GM13976 (cell line): ENCODE measurements at regions of chr6 and their contacts with region 1.

Region 1: GRCh38 chr6:157756708-157757429 is 66.2 kb upstream of the SNX9 start:
- DNase-seq: peak; percentile 58
- CTCF ChIP-seq: peak; percentile 81

Region 2: GRCh38 chr6:157688960-157689599 is 67.8 kb before region 1 on chr6:
- in situ Hi-C with region 1: no loop called
- DNase-seq: no peak
- CTCF ChIP-seq: no peak

Region 3: DNA sequence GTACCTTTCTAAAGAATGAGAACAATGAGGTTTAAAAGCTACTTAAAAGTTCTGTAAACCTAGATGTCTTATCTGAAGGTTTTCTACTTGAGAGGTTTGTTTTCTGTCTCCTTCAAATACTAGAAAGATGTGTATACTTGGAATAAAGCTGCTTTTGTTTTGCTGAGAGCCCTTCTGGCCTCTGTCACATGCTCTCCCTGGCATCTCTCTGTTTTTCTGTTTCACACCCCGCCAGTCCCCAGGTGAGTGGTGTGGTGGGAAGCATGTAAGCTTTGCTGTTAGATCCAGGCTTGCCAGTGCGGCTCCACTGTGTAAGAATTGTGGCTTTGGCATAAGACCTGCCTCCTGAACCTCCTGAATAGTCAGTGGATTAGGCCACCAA is 123.0 kb after region 1 on chr6:
- in situ Hi-C with region 1: loop called (anchors 5 kb)
- DNase-seq: no peak
- CTCF ChIP-seq: no peak

Region 4: GRCh38 chr6:158060455-158061360 is 303.8 kb after region 1 on chr6:
- in situ Hi-C with region 1: no loop called
- DNase-seq: no peak
- CTCF ChIP-seq: no peak